SK-N-SH (cell line): ENCODE measurements at regions of chr1 and their contacts with region 1.

Region 1: GRCh38 chr1:160291248-160292220 is 6.6 kb upstream of the PEX19 start:
- DNase-seq: peak; percentile 62
- H3K4me3 ChIP-seq: no peak overlapping the region
- H3K27ac ChIP-seq: no peak overlapping the region
- H3K4me1 ChIP-seq: no peaks in the 10 kb centered on the region
- H3K27me3 ChIP-seq: no peaks in the 10 kb centered on the region
- CTCF ChIP-seq: peak; percentile 86
- EP300 ChIP-seq: no peak
- RAD21 ChIP-seq: peak; percentile 61

Region 2: DNA sequence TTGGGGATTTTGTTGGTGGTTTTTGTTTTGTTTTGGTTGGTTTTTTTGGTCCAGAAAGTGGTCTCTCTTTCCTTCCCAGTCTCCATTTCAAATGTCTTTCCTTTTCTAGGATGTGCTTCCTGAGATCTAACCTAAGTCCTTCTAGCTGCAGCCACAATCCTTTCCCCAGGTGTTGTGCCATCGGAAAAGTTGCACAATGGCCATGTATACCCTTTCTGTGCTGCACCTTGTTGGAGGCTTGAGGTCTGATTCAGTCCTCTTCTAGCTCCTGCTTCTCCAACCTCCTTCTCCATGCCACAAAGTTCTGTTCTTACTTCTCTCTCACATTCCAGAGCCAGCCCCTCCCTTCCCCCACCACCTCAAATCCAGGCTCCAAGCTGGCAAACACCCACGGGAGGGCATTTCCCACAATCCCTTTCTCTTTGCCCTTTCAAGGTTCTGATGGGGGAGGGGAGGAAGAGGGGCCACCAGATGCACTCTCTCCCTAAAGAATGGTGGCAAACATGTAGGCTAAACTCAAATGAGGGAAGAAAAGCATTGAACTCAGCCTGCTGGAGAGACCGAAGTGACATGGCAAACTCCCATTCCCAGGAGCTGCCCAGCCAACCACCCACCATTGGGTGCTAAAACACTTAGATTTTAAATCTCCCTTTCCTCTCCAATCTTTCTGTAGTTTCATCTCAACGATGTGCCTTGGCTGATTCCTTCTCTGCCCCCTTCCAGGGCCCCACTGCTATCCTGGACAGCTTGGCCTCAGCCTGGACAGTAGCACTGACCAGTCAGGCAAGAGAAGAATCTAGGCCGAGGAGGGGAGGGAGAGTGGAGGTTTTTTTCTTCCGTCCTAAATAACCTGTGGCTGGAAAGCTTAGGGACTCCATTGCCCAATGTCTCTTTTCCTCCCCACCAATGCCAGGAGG is 224.4 kb before region 1 on chr1:
- CTCF ChIA-PET with region 1: no interaction called
- POLR2A ChIA-PET with region 1: no interaction called
- DNase-seq: no peak
- H3K4me3 ChIP-seq: no peak overlapping the region
- H3K27ac ChIP-seq: no peak overlapping the region
- H3K4me1 ChIP-seq: peaks cover 0 to 9% of the 10 kb centered on the region in 2 experiments; a peak in 1 of 4 replicates
- H3K27me3 ChIP-seq: peaks cover 59% of the 10 kb centered on the region
- CTCF ChIP-seq: no peak
- EP300 ChIP-seq: no peak
- RAD21 ChIP-seq: no peak

Region 3: GRCh38 chr1:160078512-160079195 is 212.9 kb before region 1 on chr1:
- CTCF ChIA-PET with region 1: interaction called, 10 read pairs
- POLR2A ChIA-PET with region 1: no interaction called
- DNase-seq: peak; percentile 68
- H3K4me3 ChIP-seq: no peak overlapping the region; a peak in 1 of 4 replicates
- H3K27ac ChIP-seq: no peak overlapping the region
- H3K4me1 ChIP-seq: peaks cover 0 to 10% of the 10 kb centered on the region in 2 experiments; a peak in 1 of 4 replicates
- H3K27me3 ChIP-seq: peaks cover 36% of the 10 kb centered on the region
- CTCF ChIP-seq: peak; percentile 79
- EP300 ChIP-seq: no peak
- RAD21 ChIP-seq: peak; percentile 54

Region 4: DNA sequence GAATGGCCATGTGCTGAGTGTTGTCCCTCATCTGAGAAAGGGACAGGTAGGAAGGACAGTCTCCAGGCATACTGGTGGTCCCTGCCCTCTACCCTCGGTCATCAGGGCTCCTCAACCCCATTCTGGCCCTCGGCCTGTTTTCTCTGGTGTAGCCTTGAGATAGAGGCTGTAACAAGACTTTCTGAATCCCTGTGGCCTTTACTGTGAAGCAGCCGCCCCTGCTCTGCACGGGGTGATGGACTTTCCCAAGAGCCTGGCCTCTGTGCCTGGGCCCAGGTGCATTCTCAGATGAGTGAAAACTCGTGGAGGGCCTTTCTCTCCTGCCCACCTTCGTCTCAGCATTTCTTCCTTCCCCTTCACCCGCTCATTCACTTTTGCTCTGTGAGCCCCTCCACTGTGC is 104.1 kb before region 1 on chr1:
- CTCF ChIA-PET with region 1: interaction called, 76 read pairs
- POLR2A ChIA-PET with region 1: no interaction called
- DNase-seq: no peak
- H3K4me3 ChIP-seq: no peak overlapping the region
- H3K27ac ChIP-seq: no peak overlapping the region
- H3K4me1 ChIP-seq: peaks cover 0 to 3% of the 10 kb centered on the region in 2 experiments; a peak in 1 of 4 replicates
- H3K27me3 ChIP-seq: no peaks in the 10 kb centered on the region
- CTCF ChIP-seq: no peak
- EP300 ChIP-seq: no peak
- RAD21 ChIP-seq: no peak

Region 5: GRCh38 chr1:160244209-160244608 is 47.3 kb before region 1 on chr1:
- CTCF ChIA-PET with region 1: interaction called, 28 read pairs
- POLR2A ChIA-PET with region 1: interaction called, 3 read pairs
- DNase-seq: no peak
- H3K4me3 ChIP-seq: no peak overlapping the region
- H3K27ac ChIP-seq: no peak overlapping the region
- H3K4me1 ChIP-seq: peaks cover 0 to 8% of the 10 kb centered on the region in 2 experiments; a peak in 1 of 4 replicates
- H3K27me3 ChIP-seq: no peaks in the 10 kb centered on the region
- CTCF ChIP-seq: no peak
- EP300 ChIP-seq: no peak
- RAD21 ChIP-seq: no peak

Region 6: DNA sequence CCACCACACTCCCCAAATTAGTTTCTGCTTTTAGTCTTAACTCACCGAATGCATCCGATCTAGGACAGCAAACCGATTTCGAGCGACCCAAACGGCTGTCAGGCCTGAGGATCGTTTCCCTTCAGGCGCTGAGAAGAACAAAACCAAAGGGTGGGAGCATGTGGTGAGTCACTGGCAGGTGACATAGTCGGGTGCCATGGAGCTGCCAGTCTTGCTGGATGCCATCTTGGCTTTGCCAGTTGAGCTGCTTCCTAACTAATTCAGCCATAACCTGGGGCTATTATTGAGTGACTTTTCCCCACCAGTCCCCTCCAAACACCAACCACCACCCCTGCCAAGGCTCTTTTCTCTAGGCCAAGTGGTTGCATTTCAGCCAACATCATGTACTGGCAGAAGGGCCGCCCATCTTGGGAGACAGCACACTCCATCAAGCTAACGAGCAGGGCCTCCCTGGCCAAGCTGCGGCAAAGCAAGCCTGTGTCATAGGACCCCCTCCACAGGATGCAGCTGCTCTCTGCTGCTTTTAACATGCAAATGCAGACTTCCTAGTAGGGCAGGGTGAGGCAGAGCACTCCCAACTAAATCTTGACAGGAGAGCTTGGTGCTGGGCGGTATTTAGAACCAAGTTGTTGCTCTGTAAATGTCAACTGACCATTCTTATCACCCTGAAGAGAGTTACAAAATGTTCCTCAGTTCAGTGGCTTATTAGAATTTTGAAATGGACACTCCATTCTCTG is 15.8 kb after region 1 on chr1:
- CTCF ChIA-PET with region 1: interaction called, 63 read pairs
- POLR2A ChIA-PET with region 1: no interaction called
- DNase-seq: no peak
- H3K4me3 ChIP-seq: no peak overlapping the region
- H3K27ac ChIP-seq: no peak overlapping the region
- H3K4me1 ChIP-seq: no peaks in the 10 kb centered on the region
- H3K27me3 ChIP-seq: no peaks in the 10 kb centered on the region
- CTCF ChIP-seq: no peak
- EP300 ChIP-seq: no peak
- RAD21 ChIP-seq: no peak

Region 7: GRCh38 chr1:160342953-160343869 is 51.7 kb after region 1 on chr1 and contains the starts of genes COPA and NCSTN:
- CTCF ChIA-PET with region 1: interaction called, 27 read pairs
- POLR2A ChIA-PET with region 1: no interaction called
- DNase-seq: peak; percentile 90
- H3K4me3 ChIP-seq: peak within 1 kb of the TSS; percentile 94 to 98
- H3K27ac ChIP-seq: peak within 1 kb of the TSS; percentile 89
- H3K4me1 ChIP-seq: peaks cover 5 to 15% of the 10 kb centered on the region in 2 experiments; a peak in 2 of 4 replicates
- H3K27me3 ChIP-seq: no peaks in the 10 kb centered on the region
- CTCF ChIP-seq: no peak
- EP300 ChIP-seq: 0 out of 4 replicates have a peak, but pooled peaks of 1 of the 2 experiments have one; percentile 23
- RAD21 ChIP-seq: no peak
- polyA plus RNA-seq, gene COPA: 91.4 and 122 TPM in 2 replicates
- polyA plus RNA-seq, gene NCSTN: 165 and 226 TPM in 2 replicates

Region 8: GRCh38 chr1:160446945-160447600 is 155.5 kb after region 1 on chr1:
- CTCF ChIA-PET with region 1: no interaction called
- POLR2A ChIA-PET with region 1: no interaction called
- DNase-seq: no peak
- H3K4me3 ChIP-seq: no peak overlapping the region
- H3K27ac ChIP-seq: no peak overlapping the region
- H3K4me1 ChIP-seq: no peaks in the 10 kb centered on the region
- H3K27me3 ChIP-seq: 0 out of 2 replicates have a peak, but pooled peaks cover 9% of the 10 kb centered on the region
- CTCF ChIP-seq: no peak
- EP300 ChIP-seq: no peak
- RAD21 ChIP-seq: no peak